Activated T-helper 1 cell treated with anti-CD3 and anti-CD28 coated beads, Interleukin-12 subunit alpha, Interleukin-12 subunit beta, Interleukin-2, Interleukin-4 antibody, amounts not matched to agents 30 ng/mL and 10 ng/mL and 1 ng/mL, durations not matched to agents 14 hours and 24 hours and 36 hours (primary cell): ENCODE measurements at regions of chr3 and their contacts with region 1.

Region 1: DNA sequence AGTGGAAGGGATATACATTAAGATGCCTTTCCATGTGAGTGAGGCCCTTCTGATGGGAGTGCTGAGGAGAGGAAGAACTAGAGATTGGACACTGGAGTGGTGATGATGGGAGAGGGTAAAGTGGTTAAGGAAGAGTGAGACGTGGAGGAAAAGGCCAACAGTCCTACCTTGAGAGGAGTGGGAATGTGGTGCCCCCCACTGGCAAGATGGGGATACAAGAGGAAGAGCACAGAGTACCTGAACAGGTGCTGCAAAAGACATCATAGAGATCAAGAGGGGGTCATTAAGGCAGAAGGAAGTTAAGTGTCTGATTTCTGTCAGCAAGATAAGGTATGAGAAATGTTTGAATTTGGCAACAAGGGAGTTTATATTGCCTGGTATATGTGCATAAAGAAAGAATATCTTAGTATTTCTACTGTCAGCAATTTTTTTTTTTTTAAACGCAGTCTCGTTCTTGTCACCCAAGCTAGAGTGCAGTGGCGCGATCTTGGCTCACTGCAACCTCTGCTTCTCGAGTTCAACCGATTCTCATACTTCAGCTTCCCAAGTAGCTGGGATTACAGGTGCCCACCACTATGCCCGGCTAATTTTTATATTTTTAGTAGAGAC is 34.0 kb downstream of the ARIH2 start:
- DNase-seq: no peak
- H3K4me3 Mint-ChIP-seq: no peak overlapping the region
- H3K27ac Mint-ChIP-seq: peak overlapping the region; percentile 9
- H3K4me1 Mint-ChIP-seq: peaks cover 24% of the 10 kb centered on the region
- H3K27me3 Mint-ChIP-seq: no peaks in the 10 kb centered on the region

Region 2: GRCh38 chr3:48739955-48740823 is 212.4 kb before region 1 on chr3:
- intact Hi-C with region 1: loop called (anchors 5 kb)
- DNase-seq: peak; percentile 24
- H3K4me3 Mint-ChIP-seq: no peak overlapping the region
- H3K27ac Mint-ChIP-seq: no peak overlapping the region
- H3K4me1 Mint-ChIP-seq: no peaks in the 10 kb centered on the region
- H3K27me3 Mint-ChIP-seq: no peaks in the 10 kb centered on the region

Region 3: DNA sequence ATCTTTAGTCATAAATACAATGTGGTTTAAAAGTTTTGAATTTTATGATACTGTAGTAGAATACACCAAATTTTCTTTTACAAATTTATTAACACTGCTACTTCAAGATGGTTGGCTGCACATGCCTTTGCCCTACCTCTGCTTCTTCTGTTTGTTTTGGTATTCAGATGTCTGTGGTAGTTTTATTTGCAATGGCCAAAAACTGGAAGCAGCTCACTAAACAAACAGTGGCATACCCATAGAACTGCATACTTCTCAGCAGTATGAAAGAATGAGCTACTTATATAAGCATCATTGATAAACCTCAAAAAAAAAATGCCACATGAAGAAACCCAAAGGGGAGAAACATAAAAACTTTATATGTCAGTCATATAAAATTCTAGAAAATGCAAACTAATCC is 14.5 kb before region 1 on chr3:
- intact Hi-C with region 1: no loop called
- DNase-seq: no peak
- H3K4me3 Mint-ChIP-seq: no peak overlapping the region
- H3K27ac Mint-ChIP-seq: peak overlapping the region; percentile 6
- H3K4me1 Mint-ChIP-seq: peaks cover 40% of the 10 kb centered on the region
- H3K27me3 Mint-ChIP-seq: no peaks in the 10 kb centered on the region

Region 4: DNA sequence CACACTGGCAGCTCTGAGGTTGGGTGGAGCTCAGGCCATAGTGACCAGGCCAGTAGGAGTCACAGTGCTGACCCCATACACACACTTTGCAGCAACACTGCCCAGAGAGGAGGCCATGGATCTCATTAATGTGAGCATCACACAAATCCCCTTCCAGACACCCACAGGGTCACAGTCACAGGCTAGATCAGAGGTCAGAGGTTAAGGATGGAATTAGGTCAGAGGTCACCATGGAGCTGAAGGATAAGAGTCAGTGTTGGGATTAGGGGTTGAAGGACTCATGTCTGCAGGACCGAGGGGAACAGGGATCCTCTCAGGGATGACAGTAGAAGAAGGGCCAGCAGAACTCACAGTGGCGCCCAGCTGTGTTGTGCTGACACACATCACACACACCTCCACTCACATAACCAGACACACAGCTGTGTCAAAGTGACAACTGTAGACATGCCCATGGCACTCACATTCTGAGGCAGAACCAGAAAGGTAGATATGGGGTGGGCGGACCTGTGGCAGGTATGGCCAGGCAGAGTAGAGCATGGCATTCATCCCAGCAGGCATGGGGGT is 200.8 kb after region 1 on chr3:
- intact Hi-C with region 1: no loop called
- DNase-seq: no peak
- H3K4me3 Mint-ChIP-seq: no peak overlapping the region
- H3K27ac Mint-ChIP-seq: no peak overlapping the region
- H3K4me1 Mint-ChIP-seq: no peaks in the 10 kb centered on the region
- H3K27me3 Mint-ChIP-seq: peaks cover 2% of the 10 kb centered on the region